ENCODE measurements at regions of chr7 and their contacts with region 1.

Region 1: DNA sequence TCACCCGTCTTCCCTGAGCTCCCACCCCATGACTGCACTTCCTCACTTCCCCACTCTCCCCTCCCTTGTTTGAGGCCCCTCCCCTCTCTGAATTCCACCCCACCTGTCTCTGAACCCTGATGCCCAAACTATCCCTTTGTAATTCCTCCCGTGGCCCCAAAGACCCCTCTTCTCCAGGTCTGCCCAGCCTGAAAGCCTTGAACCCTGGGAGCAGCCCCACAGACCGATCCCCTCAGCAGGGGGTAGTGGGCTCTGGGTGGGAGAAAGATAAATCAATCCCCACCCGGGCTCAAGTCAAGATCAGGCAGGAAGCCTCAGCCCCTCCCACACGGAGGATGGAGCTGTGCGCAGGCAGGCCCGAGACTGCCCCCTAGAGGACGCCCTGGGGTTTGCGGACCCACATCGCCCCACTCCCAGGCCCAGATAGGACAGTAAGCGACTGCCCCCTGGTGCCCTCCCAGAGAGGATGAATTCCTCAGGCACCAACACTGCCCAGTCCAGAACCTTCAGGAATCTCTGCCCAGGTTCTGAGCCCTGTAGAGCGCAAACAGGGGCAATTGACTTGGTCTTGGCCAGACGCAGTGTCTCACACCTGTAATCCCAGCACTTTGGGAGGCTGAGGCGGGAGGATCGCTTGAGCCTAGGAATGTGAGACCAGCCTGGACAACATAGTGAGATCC is 11.7 kb downstream of the HSPB1 start:
- DNase-seq: peak; percentile 99
- ATAC-seq: peak; percentile 57
- H3K4me3 Mint-ChIP-seq: peak overlapping the region; percentile 25
- H3K27ac Mint-ChIP-seq: peak overlapping the region; percentile 82
- H3K4me1 Mint-ChIP-seq: peaks cover 18% of the 10 kb centered on the region
- H3K27me3 Mint-ChIP-seq: no peaks in the 10 kb centered on the region

Region 2: DNA sequence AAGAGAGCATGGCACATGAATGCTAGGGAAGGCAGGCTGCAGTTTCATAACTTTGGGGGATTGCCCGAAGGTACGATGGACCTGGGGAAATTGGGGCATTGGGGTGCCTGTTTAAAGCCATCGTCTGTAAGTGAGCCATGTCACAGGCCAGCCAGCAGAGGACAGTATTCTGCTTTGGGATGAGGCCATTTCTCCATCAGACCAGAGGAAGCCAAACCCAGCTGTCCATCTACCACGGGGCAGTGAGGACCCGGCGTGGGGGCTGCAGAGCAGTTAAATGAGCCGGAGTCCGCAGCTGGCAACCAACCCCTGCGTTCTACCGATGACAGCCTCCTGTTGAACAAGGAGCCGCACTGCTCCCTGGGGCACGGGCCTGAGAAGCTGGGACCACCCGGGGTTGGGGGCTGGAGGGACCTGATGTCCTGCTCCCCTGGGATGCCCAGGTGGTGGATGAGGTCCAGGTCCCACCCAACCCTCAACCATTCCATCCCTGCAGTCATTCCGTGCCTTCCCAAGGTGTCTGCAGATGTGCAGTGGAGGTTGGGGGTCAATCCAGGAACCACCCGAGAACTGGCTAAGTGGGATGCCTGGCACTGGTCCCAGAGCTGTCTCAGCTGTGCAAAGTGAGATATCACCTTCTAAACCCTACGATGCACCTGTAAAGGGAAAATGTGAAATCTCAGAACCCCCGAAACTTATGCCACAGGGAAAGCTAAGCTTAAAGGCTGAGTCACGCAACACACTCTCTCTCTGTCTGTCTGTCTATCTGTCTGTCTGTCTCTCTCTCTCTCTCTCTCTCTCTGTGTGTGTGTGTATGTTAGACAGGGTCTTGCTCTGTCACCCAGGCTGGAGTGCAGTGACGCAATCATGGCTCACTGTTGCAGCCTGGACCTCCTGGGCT is 447.4 kb before region 1 on chr7:
- CTCF ChIA-PET with region 1: no interaction called
- POLR2A ChIA-PET with region 1: no interaction called
- intact Hi-C with region 1: loop called in 1 of 2 experiments (anchors 5 kb)
- DNase-seq: peak; percentile 69
- ATAC-seq: peak; percentile 74
- H3K4me3 Mint-ChIP-seq: no peak overlapping the region
- H3K27ac Mint-ChIP-seq: no peak overlapping the region
- H3K4me1 Mint-ChIP-seq: peaks cover 24% of the 10 kb centered on the region
- H3K27me3 Mint-ChIP-seq: peaks cover 8% of the 10 kb centered on the region

Region 3: GRCh38 chr7:75994388-75995051 is 319.7 kb before region 1 on chr7 and contains the start of gene TMEM120A:
- CTCF ChIA-PET with region 1: no interaction called
- POLR2A ChIA-PET with region 1: no interaction called
- intact Hi-C with region 1: loop called in 1 of 2 experiments (anchors 1 kb)
- DNase-seq: peak; percentile 97
- ATAC-seq: peak; percentile 99
- H3K4me3 Mint-ChIP-seq: peak within 1 kb of the TSS; percentile 66
- H3K27ac Mint-ChIP-seq: no peak within 1 kb of the TSS
- H3K4me1 Mint-ChIP-seq: peaks cover 29% of the 10 kb centered on the region
- H3K27me3 Mint-ChIP-seq: no peaks in the 10 kb centered on the region
- total RNA-seq, gene TMEM120A: 14.5 to 15.3 TPM

Region 4: DNA sequence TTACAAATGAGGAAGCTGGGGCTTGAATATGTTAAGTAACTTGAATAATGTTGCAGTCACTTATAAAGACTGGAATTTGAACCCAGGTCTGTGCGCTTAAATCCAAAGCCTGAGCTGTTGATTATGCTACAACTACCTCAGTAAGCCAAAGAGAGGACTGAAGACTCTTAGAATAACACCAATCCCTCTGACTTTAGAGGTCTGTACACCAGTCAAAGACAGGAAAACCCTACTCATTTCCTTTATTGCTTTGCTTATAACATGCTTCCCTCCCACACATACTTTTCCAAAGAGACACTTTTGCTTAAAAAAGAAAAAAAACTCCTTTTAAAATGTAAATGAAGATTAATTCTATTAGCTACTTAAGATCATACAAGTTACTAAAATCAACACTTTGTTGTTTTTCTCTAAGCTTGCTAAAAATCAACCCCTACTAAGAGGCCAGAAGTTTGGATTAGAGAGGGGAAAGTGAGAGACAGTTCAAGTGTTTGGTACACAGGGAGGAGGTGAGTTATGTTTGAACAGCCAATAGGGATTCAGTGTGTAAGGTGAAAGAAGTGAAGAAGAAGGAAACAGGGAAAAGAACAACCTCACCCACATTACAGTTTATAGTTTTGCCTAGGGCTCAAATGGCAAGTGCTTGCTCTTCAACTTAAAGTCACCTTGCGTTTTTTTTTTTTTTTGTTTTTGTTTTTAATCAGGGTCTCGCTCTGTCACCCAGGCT is 191.5 kb before region 1 on chr7:
- CTCF ChIA-PET with region 1: no interaction called
- POLR2A ChIA-PET with region 1: no interaction called
- intact Hi-C with region 1: no loop called
- DNase-seq: no peak
- ATAC-seq: peak; percentile 64
- H3K4me3 Mint-ChIP-seq: no peak overlapping the region
- H3K27ac Mint-ChIP-seq: no peak overlapping the region
- H3K4me1 Mint-ChIP-seq: peaks cover 22% of the 10 kb centered on the region
- H3K27me3 Mint-ChIP-seq: no peaks in the 10 kb centered on the region

Region 5: GRCh38 chr7:76166404-76167255 is 147.6 kb before region 1 on chr7:
- CTCF ChIA-PET with region 1: interaction called, 8 read pairs
- POLR2A ChIA-PET with region 1: interaction called, 3 read pairs
- intact Hi-C with region 1: loop called in 1 of 2 experiments (anchors 1 kb)
- DNase-seq: peak; percentile 97
- ATAC-seq: peak; percentile 90
- H3K4me3 Mint-ChIP-seq: peak overlapping the region; percentile 79
- H3K27ac Mint-ChIP-seq: peak overlapping the region; percentile 93
- H3K4me1 Mint-ChIP-seq: peaks cover 8% of the 10 kb centered on the region
- H3K27me3 Mint-ChIP-seq: no peaks in the 10 kb centered on the region

Region 6: GRCh38 chr7:76220185-76221057 is 93.8 kb before region 1 on chr7:
- CTCF ChIA-PET with region 1: no interaction called
- POLR2A ChIA-PET with region 1: no interaction called
- intact Hi-C with region 1: no loop called
- DNase-seq: no peak
- ATAC-seq: no peak
- H3K4me3 Mint-ChIP-seq: no peak overlapping the region
- H3K27ac Mint-ChIP-seq: no peak overlapping the region
- H3K4me1 Mint-ChIP-seq: no peaks in the 10 kb centered on the region
- H3K27me3 Mint-ChIP-seq: peaks cover 33% of the 10 kb centered on the region

Region 7: GRCh38 chr7:76262683-76263402 is 51.3 kb before region 1 on chr7:
- CTCF ChIA-PET with region 1: interaction called, 7 read pairs
- POLR2A ChIA-PET with region 1: no interaction called
- intact Hi-C with region 1: loop called in 1 of 2 experiments (anchors 1 kb)
- DNase-seq: peak; percentile 69
- ATAC-seq: peak; percentile 47
- H3K4me3 Mint-ChIP-seq: no peak overlapping the region
- H3K27ac Mint-ChIP-seq: no peak overlapping the region
- H3K4me1 Mint-ChIP-seq: peaks cover under 1% of the 10 kb centered on the region
- H3K27me3 Mint-ChIP-seq: peaks cover 28% of the 10 kb centered on the region

Region 8: GRCh38 chr7:76302347-76303201 is 11.6 kb before region 1 on chr7 and contains the start of gene HSPB1:
- CTCF ChIA-PET with region 1: interaction called, 24 read pairs
- POLR2A ChIA-PET with region 1: no interaction called
- intact Hi-C with region 1: loop called in 1 of 2 experiments (anchors 1 kb)
- DNase-seq: peak; percentile 77
- ATAC-seq: peak; percentile 40
- H3K4me3 Mint-ChIP-seq: peak within 1 kb of the TSS; percentile 81
- H3K27ac Mint-ChIP-seq: peak within 1 kb of the TSS; percentile 93
- H3K4me1 Mint-ChIP-seq: peaks cover 14% of the 10 kb centered on the region
- H3K27me3 Mint-ChIP-seq: no peaks in the 10 kb centered on the region
- total RNA-seq, gene HSPB1: 71.1 to 127 TPM

Region 9: GRCh38 chr7:76393116-76394031 is 79.2 kb after region 1 on chr7:
- CTCF ChIA-PET with region 1: interaction called, 3 read pairs
- POLR2A ChIA-PET with region 1: interaction called, 3 read pairs
- intact Hi-C with region 1: loop called in 1 of 2 experiments (anchors 1 kb)
- DNase-seq: peak; percentile 94
- ATAC-seq: peak; percentile 85
- H3K4me3 Mint-ChIP-seq: peak overlapping the region; percentile 76
- H3K27ac Mint-ChIP-seq: peak overlapping the region; percentile 98
- H3K4me1 Mint-ChIP-seq: peaks cover 22% of the 10 kb centered on the region
- H3K27me3 Mint-ChIP-seq: no peaks in the 10 kb centered on the region

Region 10: GRCh38 chr7:76424721-76425511 is 110.7 kb after region 1 on chr7 and contains the start of gene ZP3:
- CTCF ChIA-PET with region 1: no interaction called
- POLR2A ChIA-PET with region 1: no interaction called
- intact Hi-C with region 1: no loop called
- DNase-seq: no peak
- ATAC-seq: no peak
- H3K4me3 Mint-ChIP-seq: no peak within 1 kb of the TSS
- H3K27ac Mint-ChIP-seq: no peak within 1 kb of the TSS
- H3K4me1 Mint-ChIP-seq: peaks cover 6% of the 10 kb centered on the region
- H3K27me3 Mint-ChIP-seq: peaks cover 2% of the 10 kb centered on the region
- total RNA-seq, gene ZP3: 7.0 to 7.9 TPM

Measured in activated CD4-positive, alpha-beta T cell treated with anti-CD3 and anti-CD28 coated beads for 36 hours (primary cell).